ENCODE measurements at regions of chr12 and their contacts with region 1.

Region 1: DNA sequence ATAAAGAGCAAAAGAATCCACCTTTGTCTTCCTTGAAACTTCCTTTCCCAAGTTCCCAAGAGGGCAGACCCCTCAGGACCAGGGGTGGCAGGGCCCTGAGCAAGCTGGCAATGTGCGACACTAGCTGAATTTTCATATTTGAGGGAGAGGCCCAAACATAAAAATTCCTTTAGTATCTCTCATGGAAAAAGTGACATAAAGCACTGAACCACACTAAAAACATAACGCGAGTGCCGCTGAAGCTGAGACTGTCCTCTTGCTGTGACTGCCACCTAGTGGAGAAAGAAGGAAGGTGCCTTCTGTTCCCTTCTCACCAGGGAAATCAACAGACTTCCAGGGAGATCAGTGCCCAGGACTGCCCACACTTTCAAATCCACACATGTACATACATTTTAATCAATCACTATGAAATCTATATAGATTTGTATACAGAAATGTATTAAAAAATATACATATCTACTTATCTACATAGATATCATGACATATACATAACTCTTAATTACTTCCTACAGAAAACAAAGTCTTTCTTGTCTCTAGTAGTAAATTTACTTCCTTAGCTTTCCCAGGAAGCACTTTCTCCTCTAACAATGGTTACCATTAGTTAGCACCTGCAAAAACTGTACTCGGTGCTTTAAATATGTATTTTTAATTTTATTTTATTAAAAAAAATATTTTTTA is 53.8 kb downstream of the SSH1 start:
- DNase-seq: peak; percentile 68
- H3K4me3 ChIP-seq: no peak overlapping the region
- H3K27ac ChIP-seq: peak overlapping the region; percentile 67
- H3K4me1 ChIP-seq: peaks cover 36% of the 10 kb centered on the region
- H3K27me3 ChIP-seq: no peaks in the 10 kb centered on the region
- CTCF ChIP-seq: peak; percentile 97 to 98

Region 2: DNA sequence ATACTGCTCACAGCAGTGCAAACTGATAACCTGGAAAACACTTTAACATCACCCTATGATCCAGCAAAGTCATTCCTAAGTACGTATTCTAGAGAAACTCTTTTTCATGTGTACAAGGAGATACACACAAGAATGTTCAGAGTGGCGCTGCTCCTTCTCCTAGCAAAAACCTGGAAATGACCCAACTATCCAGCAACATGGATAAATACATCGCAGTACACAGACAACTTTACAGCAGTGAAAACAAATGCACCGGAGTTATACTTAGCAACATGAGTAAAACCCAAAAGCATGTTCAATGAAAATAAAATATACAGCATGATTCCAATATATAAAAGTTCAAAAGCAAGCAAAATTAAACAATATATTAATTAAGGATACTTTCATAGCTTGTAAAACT is 261.2 kb before region 1 on chr12:
- CTCF ChIA-PET with region 1: no interaction called
- dilution Hi-C with region 1: no loop called
- in situ Hi-C with region 1: no loop called
- intact Hi-C with region 1: no loop called
- DNase-seq: no peak
- H3K4me3 ChIP-seq: no peak overlapping the region
- H3K27ac ChIP-seq: no peak overlapping the region
- H3K4me1 ChIP-seq: peaks cover 2% of the 10 kb centered on the region
- H3K27me3 ChIP-seq: no peaks in the 10 kb centered on the region
- CTCF ChIP-seq: no peak

Region 3: GRCh38 chr12:108562348-108563135 is 241.0 kb before region 1 on chr12 and contains the start of gene ISCU:
- CTCF ChIA-PET with region 1: no interaction called
- dilution Hi-C with region 1: no loop called
- in situ Hi-C with region 1: loop called in 1 of 2 experiments (anchors 25 kb)
- intact Hi-C with region 1: loop called (anchors 1 kb)
- DNase-seq: peak; percentile 96
- H3K4me3 ChIP-seq: peak within 1 kb of the TSS; percentile 88
- H3K27ac ChIP-seq: peak within 1 kb of the TSS; percentile 93
- H3K4me1 ChIP-seq: peaks cover 30% of the 10 kb centered on the region
- H3K27me3 ChIP-seq: no peaks in the 10 kb centered on the region
- CTCF ChIP-seq: no peak
- total RNA-seq, gene ISCU: 55.3 to 77.6 TPM

Region 4: DNA sequence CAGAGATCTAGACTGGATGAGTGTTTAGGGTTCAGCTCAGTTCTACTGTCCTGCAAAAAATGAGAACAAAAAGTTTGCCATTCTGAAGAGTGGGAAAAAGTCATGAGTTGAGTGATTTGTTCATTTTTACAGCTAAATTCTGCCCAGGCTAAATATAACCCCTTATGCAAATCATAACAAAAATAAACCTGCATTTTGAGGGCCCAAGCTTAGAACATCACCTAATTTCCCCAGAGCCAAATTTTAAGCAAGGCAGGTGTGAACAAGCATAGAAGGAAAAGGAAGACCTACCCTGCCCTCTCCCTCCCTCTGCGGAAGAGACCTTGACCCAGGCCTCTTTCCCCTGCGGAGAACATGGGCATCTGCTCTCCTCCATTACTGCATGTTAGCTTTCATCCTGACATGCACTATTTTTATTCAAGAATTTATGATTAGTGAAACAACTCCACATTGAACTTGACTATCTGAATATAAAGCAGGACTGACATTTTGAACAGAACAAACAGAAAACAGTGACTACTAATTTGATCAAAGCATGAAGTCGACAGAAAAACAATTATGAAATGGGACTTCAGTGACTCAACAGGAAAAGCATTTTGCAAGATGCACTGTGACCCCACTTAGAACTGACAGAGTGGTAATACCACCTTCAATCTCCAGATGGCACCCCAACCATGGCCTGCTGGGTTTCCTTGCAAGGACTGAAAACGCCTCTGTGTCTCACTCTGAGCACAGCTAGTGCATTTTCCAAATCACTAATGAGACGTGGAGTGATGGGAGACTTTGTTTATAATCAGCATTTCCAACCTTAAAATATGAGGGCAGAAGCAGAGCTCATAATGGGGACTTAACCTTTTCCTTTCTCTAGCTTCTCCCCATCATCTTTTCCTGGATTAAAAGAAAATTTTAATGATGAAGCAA is 139.0 kb before region 1 on chr12:
- CTCF ChIA-PET with region 1: no interaction called
- dilution Hi-C with region 1: no loop called
- in situ Hi-C with region 1: loop called in 1 of 2 experiments (anchors 5 kb)
- intact Hi-C with region 1: loop called (anchors 1 kb)
- DNase-seq: peak; percentile 90
- H3K4me3 ChIP-seq: no peak overlapping the region
- H3K27ac ChIP-seq: peak overlapping the region; percentile 75
- H3K4me1 ChIP-seq: peaks cover 21% of the 10 kb centered on the region
- H3K27me3 ChIP-seq: no peaks in the 10 kb centered on the region
- CTCF ChIP-seq: peak; percentile 97 to 98

Region 5: DNA sequence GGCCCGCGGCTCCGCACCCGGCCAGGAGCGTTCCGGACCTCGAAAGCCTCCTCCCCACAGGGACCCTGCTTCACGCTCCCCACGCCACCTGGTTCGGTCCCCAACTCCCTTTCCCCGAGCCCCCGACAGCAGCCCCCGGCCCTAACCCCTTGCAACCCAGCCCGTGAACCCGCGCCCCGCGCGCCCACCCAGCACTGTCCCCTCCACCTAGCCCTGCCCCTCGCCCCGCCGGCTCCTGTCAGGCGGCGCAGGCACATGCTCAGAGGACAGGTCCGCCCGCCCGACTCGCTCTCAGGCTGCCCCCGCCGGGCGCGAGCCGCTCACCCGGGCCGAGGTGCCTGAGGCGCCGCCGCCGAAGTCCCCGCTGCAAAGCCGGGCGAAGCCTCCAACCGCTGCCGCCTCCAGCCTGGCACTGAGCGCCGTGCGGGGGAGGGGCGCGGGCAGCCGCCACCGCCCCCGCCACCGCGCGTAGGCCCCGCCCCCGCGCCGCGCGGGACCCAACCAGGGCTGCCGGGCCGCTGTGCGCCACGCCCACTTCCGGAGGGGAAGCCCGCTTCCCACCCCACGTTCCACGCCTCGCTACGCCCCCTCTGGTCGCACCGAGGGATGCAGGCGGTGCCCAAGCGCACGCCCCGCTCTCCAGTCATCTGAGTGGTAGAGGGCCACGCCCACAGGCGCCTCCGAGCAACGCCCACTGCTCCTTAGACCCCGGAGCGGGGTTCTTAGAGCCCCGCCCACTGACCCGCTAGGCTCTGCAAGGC is 72.3 kb before region 1 on chr12 and contains the start of gene CORO1C:
- CTCF ChIA-PET with region 1: no interaction called
- dilution Hi-C with region 1: no loop called
- in situ Hi-C with region 1: no loop called
- intact Hi-C with region 1: loop called (anchors 1 kb)
- DNase-seq: peak; percentile 95
- H3K4me3 ChIP-seq: peak within 1 kb of the TSS; percentile 87 to 99 (median 98)
- H3K27ac ChIP-seq: peak within 1 kb of the TSS; percentile 99
- H3K4me1 ChIP-seq: peaks cover 37% of the 10 kb centered on the region
- H3K27me3 ChIP-seq: no peaks in the 10 kb centered on the region
- CTCF ChIP-seq: peak; percentile 75 to 88
- total RNA-seq, gene CORO1C: 173 to 245 TPM

Region 6: GRCh38 chr12:108833355-108833733 is 29.8 kb after region 1 on chr12:
- CTCF ChIA-PET with region 1: interaction called, 4 read pairs
- dilution Hi-C with region 1: no loop called
- in situ Hi-C with region 1: no loop called
- intact Hi-C with region 1: loop called (anchors 1 kb)
- DNase-seq: peak; percentile 73
- H3K4me3 ChIP-seq: peak overlapping the region in 1 of 3 experiments; percentile 14
- H3K27ac ChIP-seq: peak overlapping the region; percentile 91
- H3K4me1 ChIP-seq: peaks cover 56% of the 10 kb centered on the region
- H3K27me3 ChIP-seq: no peaks in the 10 kb centered on the region
- CTCF ChIP-seq: no peak

Region 7: DNA sequence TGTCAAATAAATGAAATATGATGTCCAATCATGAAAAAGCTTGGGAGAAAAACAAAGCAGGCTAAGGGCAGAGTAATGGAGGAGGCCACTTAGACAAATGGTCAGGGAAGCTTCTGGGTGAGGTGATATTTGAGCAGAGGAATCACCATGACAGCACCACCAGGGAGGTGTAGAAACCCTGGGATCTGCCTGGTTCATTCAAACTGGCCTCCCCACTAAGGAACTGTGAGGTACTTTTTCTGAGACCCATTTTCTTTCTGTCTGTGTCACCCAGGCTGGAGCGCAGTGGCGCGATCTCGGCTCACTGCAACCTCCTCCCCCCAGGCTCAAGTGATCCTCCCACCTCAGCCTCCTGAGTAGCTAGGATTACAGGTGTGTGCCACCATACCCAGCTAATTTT is 61.6 kb after region 1 on chr12:
- CTCF ChIA-PET with region 1: no interaction called
- dilution Hi-C with region 1: loop called (anchors 5 kb)
- in situ Hi-C with region 1: no loop called
- intact Hi-C with region 1: no loop called
- DNase-seq: no peak
- H3K4me3 ChIP-seq: no peak overlapping the region
- H3K27ac ChIP-seq: no peak overlapping the region
- H3K4me1 ChIP-seq: no peaks in the 10 kb centered on the region
- H3K27me3 ChIP-seq: no peaks in the 10 kb centered on the region
- CTCF ChIP-seq: no peak

Region 8: GRCh38 chr12:108950991-108951739 is 147.6 kb after region 1 on chr12:
- CTCF ChIA-PET with region 1: interaction called, 3 read pairs
- dilution Hi-C with region 1: no loop called
- in situ Hi-C with region 1: loop called in 1 of 2 experiments (anchors 5 kb)
- intact Hi-C with region 1: loop called (anchors 1 kb)
- DNase-seq: peak; percentile 68
- H3K4me3 ChIP-seq: peak overlapping the region in 1 of 3 experiments; percentile 26
- H3K27ac ChIP-seq: no peak overlapping the region
- H3K4me1 ChIP-seq: peaks cover 24% of the 10 kb centered on the region
- H3K27me3 ChIP-seq: no peaks in the 10 kb centered on the region
- CTCF ChIP-seq: peak; percentile 81 to 87

Measured in mammary epithelial cell (primary cell).